Panc1 (cell line): ENCODE measurements at regions of chr1 and their contacts with region 1.

Region 1: GRCh38 chr1:40385437-40386358 is 12.2 kb downstream of the SMAP2 start:
- DNase-seq: no peak
- ATAC-seq: no peak
- H3K4me3 ChIP-seq: no peak overlapping the region
- H3K27ac ChIP-seq: peak overlapping the region; percentile 73; the same call in 1 of the 2 replicates
- H3K4me1 ChIP-seq: peaks cover 57% of the 10 kb centered on the region
- H3K27me3 ChIP-seq: no peaks in the 10 kb centered on the region
- CTCF ChIP-seq: no peak

Region 2: GRCh38 chr1:40130892-40131291 is 254.8 kb before region 1 on chr1:
- CTCF ChIA-PET with region 1: interaction called, 4 read pairs
- POLR2A ChIA-PET with region 1: interaction called, 12 read pairs
- in situ Hi-C with region 1: no loop called
- intact Hi-C with region 1: no loop called
- DNase-seq: no peak
- ATAC-seq: no peak
- H3K4me3 ChIP-seq: no peak overlapping the region
- H3K27ac ChIP-seq: no peak overlapping the region
- H3K4me1 ChIP-seq: no peaks in the 10 kb centered on the region
- H3K27me3 ChIP-seq: no peaks in the 10 kb centered on the region
- CTCF ChIP-seq: no peak

Region 3: GRCh38 chr1:40531381-40532061 is 145.8 kb after region 1 on chr1 and contains the start of gene ZNF684:
- CTCF ChIA-PET with region 1: no interaction called
- POLR2A ChIA-PET with region 1: no interaction called
- in situ Hi-C with region 1: no loop called
- intact Hi-C with region 1: no loop called
- DNase-seq: peak; percentile 89
- ATAC-seq: peak; percentile 100
- H3K4me3 ChIP-seq: peak within 1 kb of the TSS; percentile 81 to 89
- H3K27ac ChIP-seq: peak within 1 kb of the TSS; percentile 93
- H3K4me1 ChIP-seq: peaks cover 7% of the 10 kb centered on the region
- H3K27me3 ChIP-seq: no peaks in the 10 kb centered on the region
- CTCF ChIP-seq: no peak
- total RNA-seq, gene ZNF684: 5.3 TPM